CD4-positive, alpha-beta T cell (primary cell): ENCODE measurements at regions of chr1 and their contacts with region 1.

Region 1: DNA sequence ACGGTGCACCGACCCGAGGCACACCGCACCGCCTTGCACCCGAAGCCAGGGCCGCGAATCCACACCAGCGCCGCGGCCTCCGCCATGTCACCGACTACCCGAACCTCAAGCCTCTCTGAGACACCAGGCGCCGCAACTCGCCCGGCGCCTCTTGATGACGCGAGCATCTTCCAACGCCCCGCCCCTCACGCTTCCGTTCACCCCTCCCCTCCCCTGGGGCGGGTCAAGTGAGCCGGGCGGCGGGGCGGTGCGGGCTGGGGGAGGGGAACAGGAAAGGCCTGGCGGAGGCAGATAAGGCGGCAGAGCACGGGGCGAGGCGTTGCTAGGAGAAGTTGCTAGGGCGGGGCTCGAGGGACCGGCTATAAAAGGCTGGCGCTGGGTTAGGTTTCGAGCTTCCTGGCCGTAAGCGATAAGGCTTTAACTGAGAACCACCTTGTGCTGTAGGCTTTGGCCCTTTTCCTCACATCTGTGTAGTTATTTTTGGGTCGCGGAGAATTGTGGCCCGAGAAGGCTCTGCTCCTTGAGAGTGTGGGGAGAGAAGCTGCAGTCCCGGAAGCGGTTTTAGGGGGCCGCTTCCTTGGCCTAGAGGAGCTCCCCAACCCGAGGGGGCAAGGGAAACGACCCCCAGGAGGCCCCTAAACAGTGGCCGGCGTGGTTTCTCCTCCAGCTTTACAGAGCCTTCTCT is at the start of gene SDE2:
- DNase-seq: peak; percentile 99 to 100 (median 100)
- ATAC-seq: peak; percentile 75
- H3K4me3 ChIP-seq: peak within 1 kb of the TSS; percentile 88
- H3K4me3 Mint-ChIP-seq: peak within 1 kb of the TSS; percentile 99
- H3K27ac ChIP-seq: peak within 1 kb of the TSS; percentile 99
- H3K27ac Mint-ChIP-seq: peak within 1 kb of the TSS; percentile 96
- H3K4me1 ChIP-seq: peaks cover 68% of the 10 kb centered on the region
- H3K4me1 Mint-ChIP-seq: peaks cover 83% of the 10 kb centered on the region
- H3K27me3 ChIP-seq: no peaks in the 10 kb centered on the region
- H3K27me3 Mint-ChIP-seq: no peaks in the 10 kb centered on the region
- CTCF ChIP-seq: no peak
- total RNA-seq, gene SDE2: 48.2 to 49.3 TPM

Region 2: GRCh38 chr1:225467193-225468020 is 532.0 kb before region 1 on chr1:
- CTCF ChIA-PET with region 1: no interaction called
- POLR2A ChIA-PET with region 1: interaction called, 28 read pairs
- intact Hi-C with region 1: no loop called
- DNase-seq: peak; percentile 67 to 94 (median 79)
- ATAC-seq: peak; percentile 85
- H3K4me3 ChIP-seq: peak overlapping the region; percentile 79
- H3K4me3 Mint-ChIP-seq: peak overlapping the region; percentile 96
- H3K27ac ChIP-seq: peak overlapping the region; percentile 92 to 94
- H3K27ac Mint-ChIP-seq: peak overlapping the region; percentile 99
- H3K4me1 ChIP-seq: peaks cover 56% of the 10 kb centered on the region
- H3K4me1 Mint-ChIP-seq: peaks cover 40% of the 10 kb centered on the region
- H3K27me3 ChIP-seq: no peaks in the 10 kb centered on the region
- H3K27me3 Mint-ChIP-seq: no peaks in the 10 kb centered on the region
- CTCF ChIP-seq: no peak

Region 3: GRCh38 chr1:225896937-225897549 is 102.3 kb before region 1 on chr1:
- CTCF ChIA-PET with region 1: no interaction called
- POLR2A ChIA-PET with region 1: interaction called, 39 read pairs
- intact Hi-C with region 1: loop called in 1 of 2 experiments (anchors 1 kb)
- DNase-seq: peak; percentile 45 to 95 (median 60)
- ATAC-seq: peak; percentile 92
- H3K4me3 ChIP-seq: peak overlapping the region; percentile 26
- H3K4me3 Mint-ChIP-seq: peak overlapping the region; percentile 55
- H3K27ac ChIP-seq: peak overlapping the region; percentile 81 to 90
- H3K27ac Mint-ChIP-seq: peak overlapping the region; percentile 98
- H3K4me1 ChIP-seq: peaks cover 53% of the 10 kb centered on the region
- H3K4me1 Mint-ChIP-seq: peaks cover 60% of the 10 kb centered on the region
- H3K27me3 ChIP-seq: no peaks in the 10 kb centered on the region
- H3K27me3 Mint-ChIP-seq: no peaks in the 10 kb centered on the region
- CTCF ChIP-seq: no peak

Region 4: GRCh38 chr1:225944951-225945350 is 54.4 kb before region 1 on chr1:
- CTCF ChIA-PET with region 1: no interaction called
- POLR2A ChIA-PET with region 1: no interaction called
- intact Hi-C with region 1: no loop called
- DNase-seq: peak in 3 of 14 experiments; percentile 11 to 36 (median 16)
- ATAC-seq: peak; percentile 52
- H3K4me3 ChIP-seq: no peak overlapping the region
- H3K4me3 Mint-ChIP-seq: no peak overlapping the region
- H3K27ac ChIP-seq: no peak overlapping the region
- H3K27ac Mint-ChIP-seq: no peak overlapping the region
- H3K4me1 ChIP-seq: peaks cover 11% of the 10 kb centered on the region
- H3K4me1 Mint-ChIP-seq: peaks cover 12% of the 10 kb centered on the region
- H3K27me3 ChIP-seq: no peaks in the 10 kb centered on the region
- H3K27me3 Mint-ChIP-seq: peaks cover 3% of the 10 kb centered on the region
- CTCF ChIP-seq: no peak

Region 5: DNA sequence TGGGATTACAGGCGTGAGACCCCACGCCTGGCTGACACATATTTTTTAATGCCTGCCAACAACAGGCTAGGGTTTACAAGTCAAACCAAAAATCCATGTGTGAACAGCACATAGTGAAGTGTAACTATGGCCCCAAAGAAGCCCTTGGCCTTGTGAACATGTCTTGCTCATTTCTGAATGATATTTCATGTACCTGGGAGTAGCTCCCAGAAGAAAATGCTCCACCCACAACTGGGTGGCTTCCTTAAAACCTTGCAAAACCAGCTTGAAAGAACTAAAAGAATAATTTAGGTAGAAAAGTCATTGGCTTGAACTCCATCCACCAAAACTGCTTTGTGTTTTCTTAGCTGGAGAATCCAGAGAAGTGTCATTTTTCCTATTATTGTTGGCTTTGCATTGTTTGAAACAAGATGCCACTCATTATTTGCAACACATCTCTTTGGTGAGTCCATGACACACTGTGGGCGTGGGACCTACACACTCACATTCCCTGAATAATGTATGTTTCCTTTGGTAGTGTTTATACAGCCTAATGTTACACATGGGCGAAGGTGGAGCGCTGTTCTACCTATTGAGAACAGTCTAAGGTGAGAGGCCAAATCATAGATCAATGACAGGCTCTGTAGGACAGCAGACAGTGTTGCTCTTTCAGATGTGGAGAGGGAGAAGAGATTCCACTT is 28.3 kb after region 1 on chr1:
- CTCF ChIA-PET with region 1: no interaction called
- POLR2A ChIA-PET with region 1: interaction called, 12 read pairs
- intact Hi-C with region 1: no loop called
- DNase-seq: no peak
- ATAC-seq: no peak
- H3K4me3 ChIP-seq: no peak overlapping the region
- H3K4me3 Mint-ChIP-seq: no peak overlapping the region
- H3K27ac ChIP-seq: no peak overlapping the region
- H3K27ac Mint-ChIP-seq: no peak overlapping the region
- H3K4me1 ChIP-seq: no peaks in the 10 kb centered on the region
- H3K4me1 Mint-ChIP-seq: no peaks in the 10 kb centered on the region
- H3K27me3 ChIP-seq: no peaks in the 10 kb centered on the region
- H3K27me3 Mint-ChIP-seq: no peaks in the 10 kb centered on the region
- CTCF ChIP-seq: no peak

Region 6: GRCh38 chr1:226083302-226084101 is 84.1 kb after region 1 on chr1:
- CTCF ChIA-PET with region 1: no interaction called
- POLR2A ChIA-PET with region 1: interaction called, 25 read pairs
- intact Hi-C with region 1: no loop called
- DNase-seq: peak; percentile 83 to 96 (median 90)
- ATAC-seq: peak; percentile 94
- H3K4me3 ChIP-seq: peak overlapping the region; percentile 77
- H3K4me3 Mint-ChIP-seq: peak overlapping the region; percentile 91
- H3K27ac ChIP-seq: peak overlapping the region in 1 of 2 donors; percentile 7
- H3K27ac Mint-ChIP-seq: peak overlapping the region; percentile 39
- H3K4me1 ChIP-seq: peaks cover 19% of the 10 kb centered on the region
- H3K4me1 Mint-ChIP-seq: peaks cover 10% of the 10 kb centered on the region
- H3K27me3 ChIP-seq: no peaks in the 10 kb centered on the region
- H3K27me3 Mint-ChIP-seq: no peaks in the 10 kb centered on the region
- CTCF ChIP-seq: no peak

Region 7: GRCh38 chr1:226186124-226187018 is 187.0 kb after region 1 on chr1 and contains the start of gene ACBD3:
- CTCF ChIA-PET with region 1: no interaction called
- POLR2A ChIA-PET with region 1: interaction called, 3 read pairs
- intact Hi-C with region 1: loop called in 1 of 2 experiments (anchors 5 kb)
- DNase-seq: peak; percentile 73 to 94 (median 79)
- ATAC-seq: peak; percentile 98
- H3K4me3 ChIP-seq: peak within 1 kb of the TSS; percentile 93
- H3K4me3 Mint-ChIP-seq: peak within 1 kb of the TSS; percentile 98
- H3K27ac ChIP-seq: peak within 1 kb of the TSS; percentile 70 to 80
- H3K27ac Mint-ChIP-seq: peak within 1 kb of the TSS; percentile 89
- H3K4me1 ChIP-seq: peaks cover 38% of the 10 kb centered on the region
- H3K4me1 Mint-ChIP-seq: peaks cover 36% of the 10 kb centered on the region
- H3K27me3 ChIP-seq: no peaks in the 10 kb centered on the region
- H3K27me3 Mint-ChIP-seq: no peaks in the 10 kb centered on the region
- CTCF ChIP-seq: no peak
- total RNA-seq, gene ACBD3: 26.5 to 28.3 TPM

Region 8: GRCh38 chr1:226882631-226883409 is 883.5 kb after region 1 on chr1:
- CTCF ChIA-PET with region 1: no interaction called
- POLR2A ChIA-PET with region 1: no interaction called
- intact Hi-C with region 1: no loop called
- DNase-seq: peak in 6 of 14 experiments; percentile 4 to 80 (median 47)
- ATAC-seq: peak; percentile 84
- H3K4me3 ChIP-seq: peak overlapping the region; percentile 44
- H3K4me3 Mint-ChIP-seq: peak overlapping the region; percentile 67
- H3K27ac ChIP-seq: peak overlapping the region; percentile 49 to 81
- H3K27ac Mint-ChIP-seq: peak overlapping the region; percentile 82
- H3K4me1 ChIP-seq: peaks cover 50% of the 10 kb centered on the region
- H3K4me1 Mint-ChIP-seq: peaks cover 43% of the 10 kb centered on the region
- H3K27me3 ChIP-seq: no peaks in the 10 kb centered on the region
- H3K27me3 Mint-ChIP-seq: no peaks in the 10 kb centered on the region
- CTCF ChIP-seq: no peak